ENCODE measurements at regions of chr5 and their contacts with region 1.

Region 1: DNA sequence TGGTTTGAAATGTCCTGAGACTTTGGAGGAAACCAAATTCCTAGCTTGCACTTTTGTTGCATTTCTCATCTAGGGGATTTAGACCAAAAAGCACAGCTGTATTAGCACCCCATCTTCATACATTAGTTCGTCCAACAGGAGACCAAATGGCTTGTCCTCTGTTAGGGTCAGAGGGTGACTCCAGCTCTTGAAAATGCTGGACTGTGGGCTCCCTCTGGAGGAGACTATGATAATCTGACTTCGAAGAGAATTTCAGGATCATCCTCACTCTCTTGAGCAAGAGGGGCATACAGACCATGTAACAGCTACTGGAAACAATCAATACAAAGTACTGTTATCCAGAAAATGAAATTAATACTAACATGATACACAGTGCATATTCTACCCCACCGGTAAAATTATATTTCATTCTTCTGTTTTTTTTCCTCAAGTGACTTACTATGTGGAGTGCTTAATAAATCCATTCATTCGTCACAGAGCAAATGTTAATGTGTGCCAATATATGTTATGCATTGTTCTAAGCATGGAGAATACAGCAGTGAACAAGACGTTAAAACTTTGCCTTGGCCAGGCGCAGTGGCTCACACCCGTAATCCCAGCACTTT is 63.7 kb upstream of the PPP2CA start:
- DNase-seq: peak; percentile 55
- H3K4me3 ChIP-seq: no peak overlapping the region
- H3K27ac ChIP-seq: no peak overlapping the region
- H3K4me1 ChIP-seq: no peaks in the 10 kb centered on the region
- H3K27me3 ChIP-seq: no peaks in the 10 kb centered on the region
- CTCF ChIP-seq: peak; percentile 33 to 85 (median 72)
- POLR2A ChIP-seq: no peak

Region 2: DNA sequence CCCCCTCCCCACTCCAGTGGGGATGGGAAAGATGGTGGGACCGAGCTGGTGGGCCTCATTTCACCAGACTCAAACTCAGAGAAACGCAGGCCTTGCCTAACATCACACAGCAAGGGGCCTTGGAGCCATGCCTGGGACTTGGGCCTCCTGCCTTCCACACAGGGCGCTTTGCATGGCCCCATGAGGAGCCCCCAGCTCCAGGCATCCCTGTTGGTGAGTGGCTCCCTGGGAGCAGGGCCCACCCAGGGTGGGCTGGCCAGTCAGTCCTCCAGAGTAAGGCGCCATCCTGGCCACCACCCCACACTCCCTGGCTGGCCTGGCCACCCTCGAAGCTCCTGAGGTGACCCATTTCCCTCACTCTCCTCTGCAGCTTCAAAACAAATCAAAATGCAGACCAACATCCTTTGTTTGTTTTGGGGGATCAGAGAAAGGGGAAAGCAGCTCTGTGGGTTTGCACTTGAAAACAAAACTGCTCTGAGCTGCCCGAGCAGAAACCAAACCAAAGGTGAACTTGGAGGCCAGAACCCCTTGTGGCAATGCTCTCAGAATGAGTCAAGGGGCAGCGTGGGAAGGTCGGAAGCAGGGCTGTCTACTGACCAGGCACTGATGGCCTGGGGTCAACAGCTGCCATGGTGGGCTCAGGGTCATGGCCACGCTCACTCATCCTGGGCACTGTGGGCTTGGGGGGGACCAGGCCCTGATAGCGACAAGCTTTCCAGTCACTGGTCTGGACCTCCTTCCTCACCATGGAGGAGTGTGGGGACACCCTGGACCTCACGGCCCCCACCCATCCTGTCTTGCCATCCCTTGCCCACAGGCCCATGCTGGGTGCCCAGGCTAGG is 247.8 kb before region 1 on chr5:
- intact Hi-C with region 1: loop called (anchors 10 kb)
- DNase-seq: no peak
- H3K4me3 ChIP-seq: no peak overlapping the region
- H3K27ac ChIP-seq: no peak overlapping the region
- H3K4me1 ChIP-seq: no peaks in the 10 kb centered on the region
- H3K27me3 ChIP-seq: no peaks in the 10 kb centered on the region
- CTCF ChIP-seq: no peak
- POLR2A ChIP-seq: no peak

Region 3: DNA sequence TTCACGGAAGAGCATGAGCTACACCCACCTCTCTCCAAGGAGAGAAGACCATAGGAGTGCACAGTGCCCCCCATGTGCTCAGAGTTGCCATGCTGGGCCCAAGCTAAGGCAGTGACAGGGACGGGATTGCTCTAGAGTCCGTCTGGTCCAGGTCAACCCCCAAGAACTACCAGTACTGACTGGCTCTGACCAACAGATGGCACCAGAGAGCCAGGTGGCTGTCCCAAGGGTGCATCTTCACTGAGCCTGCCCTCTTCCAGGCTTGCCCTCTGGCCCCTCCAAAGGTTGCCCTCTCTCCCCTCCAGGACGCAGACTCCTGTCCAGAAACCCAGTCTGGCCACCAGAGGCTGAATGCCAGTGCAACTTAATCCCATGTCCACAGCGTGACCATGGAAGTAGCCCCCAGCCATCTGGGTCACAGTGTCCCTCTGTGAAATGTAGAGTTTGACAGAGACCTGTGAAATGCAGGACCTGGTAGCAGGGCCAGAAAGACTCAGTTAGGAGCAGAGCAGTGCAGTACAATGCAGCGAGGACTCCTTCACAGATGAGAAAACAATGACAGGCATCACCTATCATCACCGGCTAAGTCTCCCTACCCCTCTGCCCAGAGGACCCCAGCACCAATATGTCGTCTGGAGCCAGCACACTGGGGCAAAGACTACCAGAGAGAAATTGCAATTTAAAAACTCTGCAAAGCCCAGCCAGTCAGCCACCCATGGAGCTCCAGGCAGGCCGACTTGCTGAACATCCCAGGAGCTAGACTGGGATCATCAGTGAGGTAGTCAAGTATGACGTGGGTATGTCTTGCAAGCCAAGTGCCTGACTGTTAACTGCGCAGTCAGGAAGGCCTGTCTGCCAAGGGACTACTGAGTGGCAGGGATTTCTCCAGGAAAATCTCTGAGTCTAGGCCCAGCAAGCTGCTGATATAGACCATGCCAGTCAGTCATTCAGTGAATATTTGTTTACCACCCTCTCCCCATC is 105.2 kb before region 1 on chr5:
- intact Hi-C with region 1: loop called (anchors 2 kb)
- DNase-seq: peak; percentile 53
- H3K4me3 ChIP-seq: no peak overlapping the region
- H3K27ac ChIP-seq: no peak overlapping the region
- H3K4me1 ChIP-seq: no peaks in the 10 kb centered on the region
- H3K27me3 ChIP-seq: no peaks in the 10 kb centered on the region
- CTCF ChIP-seq: peak; percentile 79 to 91 (median 89)
- POLR2A ChIP-seq: no peak

Region 4: DNA sequence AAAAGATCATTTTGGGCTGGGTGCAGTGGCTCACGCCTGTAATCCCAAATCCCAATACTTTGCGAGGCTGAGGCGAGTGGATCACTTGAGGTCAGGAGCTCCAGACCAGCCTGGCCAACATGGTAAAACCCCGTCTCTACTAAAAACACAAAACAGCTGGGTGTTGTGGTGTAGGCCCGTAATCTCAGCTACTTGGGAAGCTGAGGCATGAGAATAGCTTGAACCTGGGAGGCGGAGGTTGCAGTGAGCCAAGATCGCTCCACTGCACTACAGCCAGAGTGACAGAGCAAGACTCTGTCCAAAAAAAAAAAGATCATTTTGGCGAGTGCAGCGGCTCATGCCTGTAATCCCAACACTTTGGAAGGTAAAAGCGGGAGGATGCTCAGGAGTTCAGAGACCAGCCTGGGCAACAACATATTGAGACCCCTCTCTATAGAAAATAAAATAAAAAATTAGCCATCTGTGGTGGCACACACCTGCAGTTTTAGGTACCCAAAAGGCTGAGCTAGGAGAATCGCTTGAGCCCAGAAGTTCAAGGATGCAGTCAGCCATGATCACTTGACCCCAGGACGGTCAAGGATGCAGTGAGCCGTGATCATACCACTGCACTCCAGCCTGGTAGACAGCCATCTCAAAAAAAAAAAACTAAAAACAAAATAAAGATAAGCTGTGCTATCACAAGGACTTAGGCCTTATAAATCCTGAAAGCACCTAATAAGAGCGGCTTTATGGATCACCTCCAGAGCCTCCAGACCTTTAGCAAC is 80.0 kb before region 1 on chr5:
- intact Hi-C with region 1: no loop called
- DNase-seq: no peak
- H3K4me3 ChIP-seq: no peak overlapping the region
- H3K27ac ChIP-seq: no peak overlapping the region
- H3K4me1 ChIP-seq: peaks cover 4% of the 10 kb centered on the region
- H3K27me3 ChIP-seq: no peaks in the 10 kb centered on the region
- CTCF ChIP-seq: no peak
- POLR2A ChIP-seq: no peak

Measured in prostate gland (tissue), 2 donors.